ENCODE measurements at regions of chr17 and their contacts with region 1.

Region 1: DNA sequence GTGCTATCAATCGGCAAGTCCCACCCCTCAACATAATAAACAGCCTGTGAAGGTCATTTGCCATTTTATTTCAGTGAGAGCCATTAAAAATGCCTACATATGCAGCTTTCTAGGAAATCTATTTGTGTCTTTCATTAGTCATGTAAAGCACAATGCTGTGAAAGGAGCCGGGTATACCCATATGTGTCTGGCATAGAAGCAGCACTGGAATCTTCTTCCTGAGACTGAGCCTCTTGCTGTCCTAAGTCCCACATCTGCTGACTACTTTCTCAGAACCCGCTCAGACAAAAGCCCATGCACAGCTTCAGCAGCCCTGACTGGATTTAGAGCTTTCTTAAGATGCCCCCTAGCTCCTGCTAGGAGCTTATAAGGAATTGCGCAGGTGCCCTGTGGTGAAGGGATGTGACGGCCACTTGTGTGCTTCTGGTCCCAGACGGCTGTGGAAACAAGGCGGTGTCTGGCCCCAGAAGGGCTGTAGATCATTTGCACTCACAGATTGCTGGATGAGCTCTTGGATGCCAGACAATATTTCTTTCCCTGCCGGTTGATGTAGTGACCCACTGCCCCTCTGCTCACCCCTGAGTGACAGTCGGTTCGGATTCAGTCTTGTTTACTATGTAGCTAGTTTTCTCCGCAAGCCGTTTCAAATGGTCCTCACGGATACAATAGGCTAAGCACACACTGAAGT is 172.2 kb downstream of the ANKFN1 start:
- DNase-seq: no peak
- ATAC-seq: no peak
- H3K4me3 ChIP-seq: no peak overlapping the region
- H3K27ac ChIP-seq: no peak overlapping the region
- H3K4me1 ChIP-seq: no peaks in the 10 kb centered on the region
- H3K27me3 ChIP-seq: no peaks in the 10 kb centered on the region
- CTCF ChIP-seq: no peak

Region 2: GRCh38 chr17:55845385-55845784 is 480.1 kb before region 1 on chr17:
- intact Hi-C with region 1: loop called (anchors 10 kb)
- DNase-seq: peak; percentile 60
- ATAC-seq: peak; percentile 82 to 84
- H3K4me3 ChIP-seq: peak overlapping the region; percentile 13
- H3K27ac ChIP-seq: no peak overlapping the region
- H3K4me1 ChIP-seq: no peaks in the 10 kb centered on the region
- H3K27me3 ChIP-seq: peaks cover 4% of the 10 kb centered on the region
- CTCF ChIP-seq: peak; percentile 61

Region 3: DNA sequence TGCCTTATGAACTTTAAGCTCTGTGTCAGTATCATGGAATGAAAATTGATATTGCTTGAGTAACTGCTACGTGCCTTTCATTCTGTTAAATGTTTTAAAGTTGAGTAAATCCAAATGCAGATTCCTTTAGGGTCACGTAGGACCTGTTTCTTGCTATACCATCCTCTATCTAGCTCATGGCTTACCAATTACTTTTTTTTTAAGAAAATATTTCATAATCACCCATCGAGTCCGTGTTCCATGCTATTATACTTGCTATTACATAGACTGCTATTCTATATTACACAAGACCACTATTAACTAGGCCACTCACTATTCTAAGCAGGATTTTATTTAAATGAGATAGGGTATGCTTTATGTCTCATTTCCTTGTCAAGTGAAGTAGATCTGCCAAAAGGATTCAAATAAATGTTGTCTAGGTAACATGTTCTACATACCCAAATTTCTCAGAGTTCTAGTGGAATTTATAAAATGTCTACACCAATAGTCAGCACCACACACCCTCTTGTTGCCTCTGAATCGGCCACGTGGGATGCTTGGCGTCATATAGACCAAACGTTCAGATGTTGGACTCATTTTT is 160.3 kb before region 1 on chr17:
- intact Hi-C with region 1: no loop called
- DNase-seq: no peak
- ATAC-seq: no peak
- H3K4me3 ChIP-seq: no peak overlapping the region
- H3K27ac ChIP-seq: no peak overlapping the region
- H3K4me1 ChIP-seq: no peaks in the 10 kb centered on the region
- H3K27me3 ChIP-seq: no peaks in the 10 kb centered on the region
- CTCF ChIP-seq: no peak